Activated B cell treated with CpG ODN at 0.5 μM for 24 hours (primary cell): ENCODE measurements at regions of chr10 and their contacts with region 1.

Region 1: DNA sequence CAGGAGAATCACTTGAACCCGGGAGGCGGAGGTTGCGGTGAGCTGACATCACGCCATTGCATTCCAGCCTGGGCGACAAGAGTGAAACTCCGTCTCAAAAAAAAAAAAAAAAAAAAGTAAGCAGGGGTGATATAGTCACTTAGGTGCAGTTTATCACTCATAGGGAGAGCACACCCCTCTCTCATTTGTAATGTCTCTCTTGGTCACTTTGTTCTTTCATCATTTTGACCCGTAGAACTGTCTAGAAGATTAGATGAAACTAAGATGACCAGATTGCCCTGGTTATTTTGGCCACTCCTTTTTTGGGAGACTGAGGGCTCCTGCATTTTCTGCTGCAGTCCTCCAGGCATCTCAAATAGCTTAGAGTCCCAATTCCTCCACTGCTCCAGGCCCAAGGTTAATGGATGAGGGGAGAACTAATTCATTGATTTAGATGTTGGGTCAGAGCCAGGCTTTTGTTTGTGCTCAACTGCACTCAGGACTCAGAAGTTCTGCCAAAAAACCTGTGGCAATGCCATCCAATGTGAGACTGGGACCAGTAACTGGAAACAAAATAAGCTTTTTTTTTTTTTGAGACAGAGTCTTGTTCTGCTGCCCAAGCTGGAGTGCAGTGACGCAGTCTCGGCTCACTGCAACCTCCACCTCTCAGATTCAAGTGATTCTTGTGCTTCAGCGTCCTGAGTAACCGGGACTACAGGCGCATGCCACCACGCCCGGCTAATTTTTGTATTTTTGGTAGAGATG is 50.0 kb upstream of the CAMK1D start:
- DNase-seq: no peak
- ATAC-seq: no peak
- H3K4me3 Mint-ChIP-seq: no peak overlapping the region
- H3K27ac Mint-ChIP-seq: no peak overlapping the region
- H3K4me1 Mint-ChIP-seq: peaks cover 9% of the 10 kb centered on the region
- H3K27me3 Mint-ChIP-seq: no peaks in the 10 kb centered on the region
- CTCF ChIP-seq: no peak

Region 2: GRCh38 chr10:12228851-12229250 is 70.5 kb before region 1 on chr10:
- CTCF ChIA-PET with region 1: no interaction called
- POLR2A ChIA-PET with region 1: no interaction called
- intact Hi-C with region 1: no loop called
- DNase-seq: no peak
- ATAC-seq: no peak
- H3K4me3 Mint-ChIP-seq: no peak overlapping the region
- H3K27ac Mint-ChIP-seq: no peak overlapping the region
- H3K4me1 Mint-ChIP-seq: no peaks in the 10 kb centered on the region
- H3K27me3 Mint-ChIP-seq: no peaks in the 10 kb centered on the region
- CTCF ChIP-seq: no peak

Region 3: DNA sequence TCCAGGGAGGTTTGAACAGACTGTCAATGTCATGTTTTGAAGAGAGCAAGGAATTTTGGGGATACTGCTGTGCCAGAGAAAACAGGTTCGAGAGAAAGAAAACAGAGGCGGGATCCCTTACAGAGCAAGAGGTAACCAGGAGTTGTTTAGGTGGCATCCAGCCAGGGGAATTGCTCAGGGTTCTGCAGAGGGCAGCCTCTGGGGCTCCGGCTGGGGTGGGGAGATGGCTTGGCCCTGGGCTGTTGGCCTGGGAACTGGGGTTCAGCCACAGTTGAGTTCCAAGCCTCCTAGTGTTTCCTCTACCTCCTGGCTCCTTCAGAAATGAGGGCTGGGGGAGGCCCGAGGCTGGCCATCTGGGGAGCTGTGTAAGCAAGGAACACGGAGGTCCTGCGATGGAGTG is 117.9 kb after region 1 on chr10:
- CTCF ChIA-PET with region 1: no interaction called
- POLR2A ChIA-PET with region 1: interaction called, 10 read pairs
- intact Hi-C with region 1: no loop called
- DNase-seq: no peak
- ATAC-seq: no peak
- H3K4me3 Mint-ChIP-seq: no peak overlapping the region
- H3K27ac Mint-ChIP-seq: peak overlapping the region; percentile 7
- H3K4me1 Mint-ChIP-seq: peaks cover 70% of the 10 kb centered on the region
- H3K27me3 Mint-ChIP-seq: no peaks in the 10 kb centered on the region
- CTCF ChIP-seq: no peak